PC-3 (cell line): ENCODE measurements at regions of chr16 and their contacts with region 1.

Region 1: DNA sequence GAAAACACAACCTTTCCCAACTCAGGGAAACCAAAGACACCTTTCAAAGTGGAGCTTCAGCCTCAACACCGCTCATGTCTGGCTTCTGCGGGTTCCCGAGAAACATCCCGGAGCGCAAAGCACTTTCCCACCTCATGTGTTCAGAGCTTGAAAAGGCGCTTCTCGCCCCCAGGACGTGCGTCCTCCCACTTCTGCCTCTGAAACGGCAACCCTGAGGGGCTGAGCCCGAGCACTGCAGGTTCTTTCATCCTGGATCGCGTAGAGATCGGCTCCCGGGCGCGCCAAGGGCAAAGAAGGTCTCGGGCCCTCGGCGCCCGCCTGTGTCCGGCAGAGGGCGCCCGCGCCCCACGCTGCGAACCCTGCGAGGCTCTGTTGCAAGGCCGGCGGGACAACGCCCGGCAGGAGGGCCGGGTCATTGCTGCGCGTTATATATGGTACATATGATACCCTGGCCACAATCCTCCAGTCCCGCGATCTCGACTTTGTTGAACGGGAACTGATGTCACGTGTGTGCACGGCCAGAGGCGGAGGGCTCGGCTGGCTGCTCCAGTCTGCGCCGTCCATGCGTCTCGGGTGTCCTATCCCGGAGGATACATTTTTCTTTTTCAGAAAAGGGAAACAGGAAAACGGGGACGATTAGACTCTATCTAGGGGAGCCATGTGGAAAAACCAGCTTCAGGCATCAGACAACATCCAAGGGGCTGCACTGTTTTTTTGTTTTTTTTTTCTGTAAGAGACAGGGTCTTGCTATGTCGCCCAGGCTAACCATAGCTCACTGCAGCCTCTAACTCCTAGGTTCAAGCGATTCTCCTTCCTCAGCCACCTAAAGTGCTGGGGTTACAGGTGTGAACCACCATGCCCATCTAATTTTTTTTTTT is 19.1 kb downstream of the COQ7 start:
- DNase-seq: peak; percentile 93
- ATAC-seq: peak; percentile 98
- H3K4me3 ChIP-seq: peak overlapping the region; percentile 73
- H3K27ac ChIP-seq: peak overlapping the region; percentile 50
- H3K4me1 ChIP-seq: peaks cover 13% of the 10 kb centered on the region
- H3K27me3 ChIP-seq: no peaks in the 10 kb centered on the region
- CTCF ChIP-seq: peak; percentile 91

Region 2: GRCh38 chr16:19167710-19168370 is 81.3 kb after region 1 on chr16 and contains the start of gene SYT17:
- CTCF ChIA-PET with region 1: interaction called, 3 read pairs
- POLR2A ChIA-PET with region 1: no interaction called
- intact Hi-C with region 1: loop called (anchors 1 kb)
- DNase-seq: peak; percentile 79
- ATAC-seq: peak; percentile 88
- H3K4me3 ChIP-seq: peak within 1 kb of the TSS; percentile 79
- H3K27ac ChIP-seq: no peak within 1 kb of the TSS
- H3K4me1 ChIP-seq: no peaks in the 10 kb centered on the region
- H3K27me3 ChIP-seq: no peaks in the 10 kb centered on the region
- CTCF ChIP-seq: peak; percentile 65
- total RNA-seq, gene SYT17: 10.8 and 11.8 TPM in 2 replicates

Region 3: GRCh38 chr16:19179546-19180490 is 93.3 kb after region 1 on chr16:
- CTCF ChIA-PET with region 1: interaction called, 4 read pairs
- POLR2A ChIA-PET with region 1: no interaction called
- intact Hi-C with region 1: loop called (anchors 1 kb)
- DNase-seq: peak; percentile 71
- ATAC-seq: peak; percentile 79
- H3K4me3 ChIP-seq: no peak overlapping the region
- H3K27ac ChIP-seq: no peak overlapping the region
- H3K4me1 ChIP-seq: no peaks in the 10 kb centered on the region
- H3K27me3 ChIP-seq: no peaks in the 10 kb centered on the region
- CTCF ChIP-seq: peak; percentile 81

Region 4: GRCh38 chr16:19375561-19376158 is 289.1 kb after region 1 on chr16:
- CTCF ChIA-PET with region 1: interaction called, 3 read pairs
- POLR2A ChIA-PET with region 1: no interaction called
- intact Hi-C with region 1: loop called (anchors 1 kb)
- DNase-seq: peak; percentile 67
- ATAC-seq: peak; percentile 67
- H3K4me3 ChIP-seq: no peak overlapping the region
- H3K27ac ChIP-seq: no peak overlapping the region
- H3K4me1 ChIP-seq: no peaks in the 10 kb centered on the region
- H3K27me3 ChIP-seq: no peaks in the 10 kb centered on the region
- CTCF ChIP-seq: peak; percentile 86

Region 5: GRCh38 chr16:19502395-19503131 is 416.0 kb after region 1 on chr16:
- CTCF ChIA-PET with region 1: no interaction called
- POLR2A ChIA-PET with region 1: no interaction called
- intact Hi-C with region 1: loop called (anchors 10 kb)
- DNase-seq: peak; percentile 74
- ATAC-seq: peak; percentile 77
- H3K4me3 ChIP-seq: no peak overlapping the region
- H3K27ac ChIP-seq: no peak overlapping the region
- H3K4me1 ChIP-seq: peaks cover 29% of the 10 kb centered on the region
- H3K27me3 ChIP-seq: no peaks in the 10 kb centered on the region
- CTCF ChIP-seq: peak; percentile 79

Region 6: GRCh38 chr16:20271893-20272292 is 1185.3 kb after region 1 on chr16:
- CTCF ChIA-PET with region 1: no interaction called
- POLR2A ChIA-PET with region 1: no interaction called
- intact Hi-C with region 1: no loop called
- DNase-seq: no peak
- ATAC-seq: no peak
- H3K4me3 ChIP-seq: no peak overlapping the region
- H3K27ac ChIP-seq: no peak overlapping the region
- H3K4me1 ChIP-seq: no peaks in the 10 kb centered on the region
- H3K27me3 ChIP-seq: no peaks in the 10 kb centered on the region
- CTCF ChIP-seq: no peak